PC-3 (cell line): ENCODE measurements at regions of chr3 and their contacts with region 1.

Region 1: GRCh38 chr3:157606011-157606851 is 103.0 kb upstream of the VEPH1 start:
- DNase-seq: peak; percentile 90
- ATAC-seq: peak; percentile 99
- H3K4me3 ChIP-seq: peak overlapping the region; percentile 21; the same call in 1 of the 2 replicates
- H3K27ac ChIP-seq: no peak overlapping the region
- H3K4me1 ChIP-seq: peaks cover 4% of the 10 kb centered on the region; the same call in 1 of the 2 replicates
- H3K27me3 ChIP-seq: no peaks in the 10 kb centered on the region
- CTCF ChIP-seq: peak; percentile 93

Region 2: DNA sequence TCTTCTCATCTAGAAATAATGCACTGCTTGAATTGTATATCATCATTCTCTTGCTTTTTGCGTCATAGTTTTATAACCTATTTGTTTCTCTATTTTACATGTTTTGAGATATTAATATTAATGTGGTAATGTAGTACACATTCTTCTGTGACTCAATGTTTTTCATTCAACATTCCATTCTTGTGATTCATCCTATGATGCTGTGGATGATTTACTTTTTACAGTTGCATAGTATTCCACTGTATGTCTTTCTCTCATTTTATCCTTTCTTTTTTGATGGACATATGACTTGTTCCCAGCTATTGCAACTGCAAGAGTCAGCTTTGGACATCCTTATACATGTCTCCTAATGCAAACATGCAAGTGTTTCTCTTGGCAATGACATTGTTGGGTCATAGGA is 82.4 kb before region 1 on chr3:
- CTCF ChIA-PET with region 1: no interaction called
- POLR2A ChIA-PET with region 1: no interaction called
- intact Hi-C with region 1: no loop called
- DNase-seq: peak; percentile 35
- ATAC-seq: no peak
- H3K4me3 ChIP-seq: no peak overlapping the region
- H3K27ac ChIP-seq: no peak overlapping the region
- H3K4me1 ChIP-seq: peaks cover 25% of the 10 kb centered on the region
- H3K27me3 ChIP-seq: no peaks in the 10 kb centered on the region
- CTCF ChIP-seq: no peak

Region 3: GRCh38 chr3:158532099-158532734 is 926.0 kb after region 1 on chr3:
- CTCF ChIA-PET with region 1: no interaction called
- POLR2A ChIA-PET with region 1: no interaction called
- intact Hi-C with region 1: loop called (anchors 1 kb)
- DNase-seq: peak; percentile 53
- ATAC-seq: no peak
- H3K4me3 ChIP-seq: no peak overlapping the region
- H3K27ac ChIP-seq: no peak overlapping the region
- H3K4me1 ChIP-seq: no peaks in the 10 kb centered on the region
- H3K27me3 ChIP-seq: no peaks in the 10 kb centered on the region
- CTCF ChIP-seq: peak; percentile 71